Prostate gland (tissue), 2 donors: ENCODE measurements at regions of chr19 and their contacts with region 1.

Region 1: GRCh38 chr19:41263850-41264580 is at the start of gene HNRNPUL1:
- DNase-seq: peak; percentile 100
- H3K4me3 ChIP-seq: peak within 1 kb of the TSS; percentile 95 to 97
- H3K27ac ChIP-seq: peak within 1 kb of the TSS; percentile 99 to 100
- H3K4me1 ChIP-seq: peaks cover 19% of the 10 kb centered on the region
- H3K27me3 ChIP-seq: no peaks in the 10 kb centered on the region
- CTCF ChIP-seq: peak in 2 of 4 experiments; percentile 2 to 48
- POLR2A ChIP-seq: peak; percentile 42
- total RNA-seq, gene HNRNPUL1: 133 to 183 TPM

Region 2: DNA sequence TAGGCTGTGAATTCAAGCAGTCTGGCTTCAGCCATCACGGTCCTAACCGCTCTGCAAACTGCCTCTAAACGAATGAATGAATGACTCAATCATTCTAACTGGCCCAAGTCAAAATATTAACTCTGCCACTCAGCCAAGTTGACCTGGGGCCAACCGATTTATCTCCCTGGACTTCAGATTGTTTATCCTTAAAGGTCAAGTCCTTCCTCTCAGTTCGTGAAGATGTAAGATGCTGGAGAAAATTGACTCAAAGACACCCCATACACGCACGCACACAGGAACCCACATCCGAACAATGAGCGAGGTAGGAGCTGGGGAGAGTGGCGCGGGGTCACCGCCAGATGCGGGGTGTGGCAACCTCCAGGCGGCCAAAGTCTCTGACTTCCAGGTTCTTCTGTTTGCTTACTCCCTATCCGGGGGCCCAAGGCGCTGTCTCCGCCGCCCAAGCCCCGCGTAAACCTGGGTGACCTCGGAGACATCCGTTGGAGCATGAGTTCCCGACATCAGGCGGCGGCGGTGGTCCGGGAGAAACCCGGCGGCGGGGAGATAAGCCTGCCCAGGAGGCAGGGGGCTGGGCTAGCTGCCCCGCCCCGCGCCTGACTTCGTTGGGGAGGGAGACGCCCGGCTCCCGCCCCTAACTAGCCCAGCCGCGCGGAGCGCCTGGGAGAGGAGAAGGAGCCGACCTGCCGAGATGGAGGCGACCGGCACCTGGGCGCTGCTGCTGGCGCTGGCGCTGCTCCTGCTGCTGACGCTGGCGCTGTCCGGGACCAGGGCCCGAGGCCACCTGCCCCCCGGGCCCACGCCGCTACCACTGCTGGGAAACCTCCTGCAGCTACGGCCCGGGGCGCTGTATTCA is 71.2 kb before region 1 on chr19 and contains the start of gene CYP2S1:
- intact Hi-C with region 1: no loop called
- DNase-seq: no peak
- H3K4me3 ChIP-seq: peak within 1 kb of the TSS; percentile 17 to 20
- H3K27ac ChIP-seq: no peak within 1 kb of the TSS
- H3K4me1 ChIP-seq: no peaks in the 10 kb centered on the region
- H3K27me3 ChIP-seq: no peaks in the 10 kb centered on the region
- CTCF ChIP-seq: no peak
- POLR2A ChIP-seq: peak; percentile 44
- total RNA-seq, gene CYP2S1: 1.1 to 4.2 TPM

Region 3: DNA sequence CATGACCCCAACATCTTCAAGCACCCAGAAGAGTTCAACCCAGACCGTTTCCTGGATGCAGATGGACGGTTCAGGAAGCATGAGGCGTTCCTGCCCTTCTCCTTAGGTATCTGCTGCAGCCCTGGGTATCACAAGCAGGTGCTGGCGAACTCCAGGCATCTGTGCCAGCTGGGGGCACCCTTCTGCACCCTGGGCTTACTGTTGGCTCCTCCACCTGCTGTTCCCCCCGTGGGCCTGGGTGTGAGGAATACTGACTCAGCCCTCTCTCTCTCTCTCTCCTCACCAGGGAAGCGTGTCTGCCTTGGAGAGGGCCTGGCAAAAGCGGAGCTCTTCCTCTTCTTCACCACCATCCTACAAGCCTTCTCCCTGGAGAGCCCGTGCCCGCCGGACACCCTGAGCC is 58.0 kb before region 1 on chr19:
- intact Hi-C with region 1: loop called (anchors 2 kb)
- DNase-seq: no peak
- H3K4me3 ChIP-seq: no peak overlapping the region
- H3K27ac ChIP-seq: no peak overlapping the region
- H3K4me1 ChIP-seq: no peaks in the 10 kb centered on the region
- H3K27me3 ChIP-seq: no peaks in the 10 kb centered on the region
- CTCF ChIP-seq: no peak
- POLR2A ChIP-seq: no peak

Region 4: DNA sequence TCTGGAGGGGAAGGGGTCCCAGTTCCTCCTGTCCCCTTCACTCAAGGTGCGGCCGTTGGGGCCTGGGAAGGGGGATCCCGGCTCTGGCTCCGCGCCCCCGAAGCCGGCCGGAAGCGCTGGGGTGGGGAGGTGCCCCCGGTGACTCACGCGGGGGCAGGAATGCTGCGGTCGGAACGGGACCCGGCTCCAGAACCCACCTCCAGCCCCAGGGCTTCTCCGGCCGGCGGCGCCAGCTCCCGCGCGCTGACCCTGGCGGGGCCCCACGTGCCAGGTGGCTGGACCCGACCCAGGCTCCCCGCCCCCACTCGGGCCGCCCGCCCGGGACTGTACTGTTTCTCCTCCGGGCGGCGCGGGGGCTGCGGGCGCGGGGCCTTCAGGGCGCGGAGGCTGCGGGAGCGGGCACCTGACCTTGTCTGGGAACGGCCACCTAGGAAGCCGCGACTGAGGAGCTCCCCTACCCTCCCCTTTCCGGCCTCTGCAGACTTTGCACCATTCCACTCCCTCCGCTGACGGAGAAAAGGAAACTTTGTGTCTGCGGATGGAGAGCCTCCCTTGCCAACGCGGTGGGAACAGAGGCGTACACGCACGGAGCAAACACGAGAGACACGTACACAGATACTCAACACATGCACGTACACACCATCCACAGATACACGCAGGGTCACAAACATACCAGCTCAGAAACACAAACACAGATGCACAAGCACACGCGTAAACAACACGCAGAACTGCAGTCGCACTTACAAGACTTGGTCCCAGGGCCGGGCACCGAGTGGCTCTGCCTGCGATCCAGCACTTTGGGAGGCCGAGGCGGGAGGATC is 37.8 kb before region 1 on chr19:
- intact Hi-C with region 1: loop called (anchors 2 kb)
- DNase-seq: peak; percentile 37
- H3K4me3 ChIP-seq: peak overlapping the region; percentile 30 to 40
- H3K27ac ChIP-seq: peak overlapping the region; percentile 72 to 75
- H3K4me1 ChIP-seq: no peaks in the 10 kb centered on the region
- H3K27me3 ChIP-seq: no peaks in the 10 kb centered on the region
- CTCF ChIP-seq: peak in 1 of 4 experiments; percentile 27
- POLR2A ChIP-seq: no peak